ENCODE measurements at regions of chr12 and their contacts with region 1.

Region 1: DNA sequence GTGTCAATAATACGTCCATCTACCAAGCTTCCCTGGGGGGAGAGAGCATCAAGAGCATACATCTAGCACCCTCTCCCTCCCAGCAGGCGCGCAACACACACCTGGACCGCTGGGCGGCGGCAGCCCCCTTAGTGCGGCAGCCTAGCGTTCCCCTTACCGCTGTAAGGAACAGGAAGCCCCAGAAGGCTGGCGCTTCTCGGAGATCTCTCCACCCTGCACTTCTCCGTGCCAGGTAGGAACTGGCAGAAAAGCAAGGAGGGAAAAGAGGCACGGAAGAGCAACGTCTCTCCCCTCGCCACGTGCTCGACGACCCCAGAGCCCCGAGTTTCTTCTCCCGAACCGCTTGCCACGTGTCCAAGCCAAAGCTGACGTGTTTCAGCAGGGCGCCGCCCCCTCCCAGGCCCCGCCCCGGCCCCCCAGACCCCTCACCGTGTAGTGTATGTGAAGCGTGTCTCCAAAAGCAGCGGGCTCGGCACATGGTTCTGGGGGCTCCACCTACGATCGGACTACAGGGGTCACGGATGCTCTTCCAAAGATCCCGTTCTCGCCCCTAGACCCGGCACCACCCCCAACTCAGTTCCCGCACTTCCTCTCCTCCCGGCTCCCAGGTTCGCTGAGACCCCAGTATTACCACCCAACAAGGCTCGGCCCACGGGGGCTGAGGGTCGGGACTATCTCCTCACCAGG is 532 bp downstream of the FKBP11 start:
- DNase-seq: peak; percentile 79 to 85 (median 81)
- H3K4me3 ChIP-seq: peak overlapping the region; percentile 20 to 97
- H3K4me3 Mint-ChIP-seq: peak overlapping the region; percentile 95 to 98 (median 97)
- H3K27ac ChIP-seq: peak overlapping the region; percentile 95
- H3K27ac Mint-ChIP-seq: peak overlapping the region; percentile 96 to 100 (median 99)
- H3K4me1 ChIP-seq: peaks cover 34% of the 10 kb centered on the region
- H3K4me1 Mint-ChIP-seq: peaks cover 36 to 66% (median 52%) of the 10 kb centered on the region in 4 donors
- H3K27me3 ChIP-seq: no peaks in the 10 kb centered on the region
- H3K27me3 Mint-ChIP-seq: no peaks in the 10 kb centered on the region

Region 2: DNA sequence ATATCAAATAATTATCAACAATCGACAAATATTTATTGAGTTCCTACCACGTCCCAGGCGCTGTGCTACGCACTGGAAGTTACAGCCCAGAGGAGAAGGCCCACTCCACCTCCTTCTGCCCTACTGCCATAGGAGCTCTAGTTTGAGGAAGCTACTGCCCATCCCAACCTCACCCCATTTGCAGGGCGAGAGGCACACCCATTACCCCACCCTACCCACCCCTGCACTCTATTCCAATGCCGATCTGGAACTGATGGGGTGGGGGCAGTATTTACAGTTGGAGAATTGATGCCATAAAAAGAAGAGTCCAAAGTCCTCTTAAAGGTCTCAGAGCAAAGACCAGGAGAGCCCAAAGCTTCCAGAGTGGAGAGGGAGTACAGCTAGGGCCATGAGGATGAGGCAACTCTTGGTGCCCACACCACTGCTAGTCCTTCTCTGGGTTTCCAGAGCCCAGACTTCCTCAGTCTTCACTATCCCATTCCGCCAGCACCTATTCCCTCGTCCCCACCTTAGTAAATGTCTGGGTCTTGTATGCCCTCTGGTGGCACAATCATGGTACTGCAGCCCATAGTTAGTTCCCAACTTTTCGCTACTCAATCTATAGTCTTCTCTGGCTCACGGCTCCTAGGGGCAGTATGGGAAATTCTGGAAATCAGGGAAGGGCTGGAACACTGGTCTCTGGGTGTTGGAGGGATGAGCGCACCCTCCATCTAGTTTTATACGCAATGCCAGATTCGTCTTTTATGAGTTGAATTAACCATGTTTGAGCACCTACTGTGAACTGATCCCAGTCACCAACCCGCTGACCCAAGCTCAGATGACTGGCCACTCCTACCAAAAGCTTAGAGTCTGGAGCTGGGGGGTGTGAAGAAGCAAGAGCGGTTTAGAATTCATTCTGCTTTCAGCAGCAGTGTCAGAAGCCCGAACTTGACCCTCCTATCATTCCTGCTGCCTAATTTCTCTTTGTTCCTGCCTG is 129.0 kb before region 1 on chr12:
- CTCF ChIA-PET with region 1: no interaction called
- POLR2A ChIA-PET with region 1: no interaction called
- intact Hi-C with region 1: no loop called
- DNase-seq: peak in 4 of 5 donors; percentile 43 to 56 (median 51)
- H3K4me3 ChIP-seq: no peak overlapping the region
- H3K4me3 Mint-ChIP-seq: no peak overlapping the region
- H3K27ac ChIP-seq: no peak overlapping the region
- H3K27ac Mint-ChIP-seq: no peak overlapping the region
- H3K4me1 ChIP-seq: no peaks in the 10 kb centered on the region
- H3K4me1 Mint-ChIP-seq: peaks cover 0 to 4% (median 3%) of the 10 kb centered on the region in 4 donors
- H3K27me3 ChIP-seq: no peaks in the 10 kb centered on the region
- H3K27me3 Mint-ChIP-seq: peaks cover 0 to 7% of the 10 kb centered on the region in 2 donors

Region 3: DNA sequence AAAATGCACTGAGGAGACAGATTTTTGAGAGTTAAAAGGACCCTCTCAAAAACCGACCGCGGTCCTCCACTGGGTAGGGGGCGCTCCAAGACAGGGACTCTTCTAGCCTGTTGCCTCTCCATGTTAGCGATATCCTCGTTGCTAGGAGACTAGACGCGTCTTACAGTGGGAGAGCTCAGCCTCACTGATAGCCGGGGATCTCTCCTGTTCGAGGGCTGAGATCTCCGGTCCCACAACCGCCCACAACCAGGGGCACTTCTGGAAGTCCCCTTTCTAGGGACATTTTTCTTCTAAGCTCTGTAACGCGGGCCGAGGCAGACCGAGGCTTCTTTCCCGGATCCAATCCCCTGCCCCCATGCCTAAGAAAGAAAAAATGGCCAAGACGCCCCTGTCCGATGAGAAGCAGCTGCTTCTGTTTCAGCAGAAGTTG is 20.8 kb before region 1 on chr12:
- CTCF ChIA-PET with region 1: interaction called, 82 read pairs
- POLR2A ChIA-PET with region 1: interaction called, 14 read pairs
- intact Hi-C with region 1: loop called (anchors 2 kb)
- DNase-seq: peak; percentile 81 to 89 (median 82)
- H3K4me3 ChIP-seq: peak overlapping the region in 1 of 2 donors; percentile 36
- H3K4me3 Mint-ChIP-seq: peak overlapping the region; percentile 68 to 86 (median 82)
- H3K27ac ChIP-seq: no peak overlapping the region
- H3K27ac Mint-ChIP-seq: peak overlapping the region in 6 of 7 donors; percentile 76 to 92 (median 89)
- H3K4me1 ChIP-seq: peaks cover 6% of the 10 kb centered on the region
- H3K4me1 Mint-ChIP-seq: peaks cover 2 to 13% (median 7%) of the 10 kb centered on the region in 4 donors
- H3K27me3 ChIP-seq: no peaks in the 10 kb centered on the region
- H3K27me3 Mint-ChIP-seq: peaks cover 0 to 4% of the 10 kb centered on the region in 2 donors

Region 4: DNA sequence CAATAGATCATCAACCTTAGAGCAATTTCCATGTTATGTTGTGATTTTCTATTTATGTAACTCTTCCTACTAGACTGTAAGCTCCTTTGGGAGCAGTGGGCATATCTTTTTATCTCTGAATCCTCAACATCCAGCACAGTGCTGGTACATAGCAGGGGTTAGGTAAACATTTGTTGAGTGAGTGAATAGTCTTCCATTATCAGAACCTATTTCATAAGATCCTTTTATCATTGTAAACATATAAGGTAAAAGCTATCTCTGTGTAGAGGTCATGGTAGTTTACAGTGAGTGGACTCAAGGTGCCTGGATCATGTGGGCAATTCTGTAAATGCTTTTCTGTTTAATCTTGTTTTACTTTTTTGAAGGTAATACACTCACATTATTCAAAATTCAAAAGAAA is 14.6 kb before region 1 on chr12:
- CTCF ChIA-PET with region 1: interaction called, 82 read pairs
- POLR2A ChIA-PET with region 1: interaction called, 8 read pairs
- intact Hi-C with region 1: loop called (anchors 2 kb)
- DNase-seq: no peak
- H3K4me3 ChIP-seq: no peak overlapping the region
- H3K4me3 Mint-ChIP-seq: no peak overlapping the region
- H3K27ac ChIP-seq: no peak overlapping the region
- H3K27ac Mint-ChIP-seq: no peak overlapping the region
- H3K4me1 ChIP-seq: no peaks in the 10 kb centered on the region
- H3K4me1 Mint-ChIP-seq: no peaks in the 10 kb centered on the region
- H3K27me3 ChIP-seq: no peaks in the 10 kb centered on the region
- H3K27me3 Mint-ChIP-seq: peaks cover 0 to 4% of the 10 kb centered on the region in 2 donors

Region 5: GRCh38 chr12:48936379-48936979 is 11.7 kb after region 1 on chr12:
- CTCF ChIA-PET with region 1: interaction called, 190 read pairs
- POLR2A ChIA-PET with region 1: interaction called, 70 read pairs
- intact Hi-C with region 1: loop called (anchors 1 kb)
- DNase-seq: peak; percentile 74 to 82 (median 78)
- H3K4me3 ChIP-seq: no peak overlapping the region
- H3K4me3 Mint-ChIP-seq: no peak overlapping the region
- H3K27ac ChIP-seq: peak overlapping the region; percentile 71
- H3K27ac Mint-ChIP-seq: peak overlapping the region; percentile 86 to 97 (median 95)
- H3K4me1 ChIP-seq: peaks cover 45% of the 10 kb centered on the region
- H3K4me1 Mint-ChIP-seq: peaks cover 31 to 50% (median 38%) of the 10 kb centered on the region in 4 donors
- H3K27me3 ChIP-seq: no peaks in the 10 kb centered on the region
- H3K27me3 Mint-ChIP-seq: no peaks in the 10 kb centered on the region

Region 6: GRCh38 chr12:48957141-48958048 is 32.6 kb after region 1 on chr12 and contains the start of gene ARF3:
- CTCF ChIA-PET with region 1: interaction called, 3 read pairs
- POLR2A ChIA-PET with region 1: interaction called, 31 read pairs
- intact Hi-C with region 1: loop called (anchors 2 kb)
- DNase-seq: peak; percentile 91 to 93 (median 93)
- H3K4me3 ChIP-seq: peak within 1 kb of the TSS; percentile 45 to 71
- H3K4me3 Mint-ChIP-seq: peak within 1 kb of the TSS; percentile 92 to 98 (median 96)
- H3K27ac ChIP-seq: peak within 1 kb of the TSS; percentile 73
- H3K27ac Mint-ChIP-seq: peak within 1 kb of the TSS; percentile 91 to 97 (median 95)
- H3K4me1 ChIP-seq: peaks cover 34% of the 10 kb centered on the region
- H3K4me1 Mint-ChIP-seq: peaks cover 27 to 54% (median 38%) of the 10 kb centered on the region in 4 donors
- H3K27me3 ChIP-seq: no peaks in the 10 kb centered on the region
- H3K27me3 Mint-ChIP-seq: peaks cover 1 to 2% of the 10 kb centered on the region in 2 donors
- total RNA-seq, gene ARF3: 69.8 to 77.5 TPM

Region 7: DNA sequence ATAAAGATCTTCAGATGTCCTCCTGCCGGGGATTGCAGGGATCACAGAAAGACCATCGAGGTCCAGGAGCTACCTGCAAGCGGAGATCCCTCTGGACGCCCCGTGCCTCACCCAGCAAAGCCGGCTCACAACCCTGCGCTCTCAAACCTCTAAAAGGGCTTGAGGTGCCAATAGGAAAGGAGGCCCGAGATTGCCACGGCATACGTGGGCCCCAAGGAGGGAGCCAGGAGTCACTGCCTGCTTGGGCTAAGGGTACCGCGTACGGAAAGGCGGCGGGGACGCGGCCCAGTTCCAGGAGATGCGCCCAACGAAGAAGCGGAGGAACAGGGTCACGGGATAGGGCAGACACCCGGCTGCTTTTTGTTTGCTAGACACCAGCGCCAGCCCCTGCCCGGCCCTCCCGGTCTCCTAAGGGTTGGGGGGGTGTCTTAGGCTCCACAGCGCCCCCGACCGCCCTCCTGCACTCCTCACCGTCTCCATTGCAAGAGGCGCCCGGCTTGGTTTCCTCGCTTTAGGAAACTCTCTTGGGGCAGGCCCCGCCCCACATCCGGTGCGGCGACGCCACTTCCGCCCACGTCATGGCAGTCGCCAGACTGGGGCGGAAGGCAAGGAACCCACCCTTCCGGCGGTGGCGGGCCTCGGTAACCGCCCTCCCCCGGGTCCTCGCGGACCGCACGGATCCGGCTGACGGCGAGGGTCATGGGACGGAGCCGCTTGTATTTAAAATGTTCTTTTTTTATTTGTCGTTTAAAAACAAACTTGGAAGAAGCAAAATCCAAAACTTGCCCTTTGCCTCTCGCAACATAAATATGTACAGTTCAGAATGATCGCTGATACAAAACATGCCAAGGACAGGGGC is 93.7 kb after region 1 on chr12 and contains the start of gene PRKAG1:
- CTCF ChIA-PET with region 1: no interaction called
- POLR2A ChIA-PET with region 1: interaction called, 3 read pairs
- intact Hi-C with region 1: loop called (anchors 1 kb)
- DNase-seq: peak; percentile 97 to 98 (median 98)
- H3K4me3 ChIP-seq: peak within 1 kb of the TSS; percentile 94 to 96
- H3K4me3 Mint-ChIP-seq: peak within 1 kb of the TSS; percentile 87 to 99 (median 94)
- H3K27ac ChIP-seq: peak within 1 kb of the TSS; percentile 95
- H3K27ac Mint-ChIP-seq: peak within 1 kb of the TSS; percentile 95 to 100 (median 99)
- H3K4me1 ChIP-seq: peaks cover 24% of the 10 kb centered on the region
- H3K4me1 Mint-ChIP-seq: peaks cover 18 to 51% (median 37%) of the 10 kb centered on the region in 4 donors
- H3K27me3 ChIP-seq: no peaks in the 10 kb centered on the region
- H3K27me3 Mint-ChIP-seq: no peaks in the 10 kb centered on the region
- total RNA-seq, gene PRKAG1: 48.9 to 53.7 TPM

Region 8: DNA sequence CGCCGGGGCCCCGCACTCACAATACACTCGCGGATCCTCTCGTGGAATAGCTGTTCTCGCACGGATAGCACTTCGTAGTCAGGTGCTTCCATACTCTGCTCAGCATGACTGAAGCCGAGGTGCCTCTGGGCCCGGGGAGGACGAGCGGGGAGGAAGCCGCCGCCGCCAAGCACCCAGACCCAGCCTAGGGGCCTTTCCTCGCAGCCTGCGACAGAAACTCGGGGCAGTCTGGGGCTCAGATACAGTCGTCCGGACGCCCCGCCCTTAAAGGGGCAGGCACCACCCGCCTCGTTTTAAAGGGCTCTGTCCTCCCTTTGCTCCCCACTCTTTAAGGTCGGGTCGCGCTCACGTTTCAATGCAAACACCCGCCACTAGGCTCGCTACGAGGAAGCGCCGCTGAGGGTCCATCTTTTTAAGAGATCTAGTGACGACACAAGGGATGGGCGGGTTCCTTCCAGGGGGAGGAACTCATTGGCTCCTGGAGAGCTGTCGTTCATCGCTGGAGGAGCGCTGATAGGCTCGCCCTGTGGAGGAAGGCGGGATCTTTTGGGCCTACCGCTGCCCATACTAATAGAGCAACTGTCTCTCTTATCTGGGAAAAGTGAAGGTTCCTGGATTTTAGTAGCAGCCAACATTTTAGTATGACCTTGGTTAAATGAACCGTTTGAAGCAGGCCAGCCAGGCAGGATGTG is 185.8 kb after region 1 on chr12 and contains the start of gene LMBR1L:
- CTCF ChIA-PET with region 1: no interaction called
- POLR2A ChIA-PET with region 1: no interaction called
- intact Hi-C with region 1: no loop called
- DNase-seq: peak; percentile 94 to 99 (median 97)
- H3K4me3 ChIP-seq: peak within 1 kb of the TSS; percentile 73 to 92
- H3K4me3 Mint-ChIP-seq: peak within 1 kb of the TSS; percentile 91 to 99 (median 98)
- H3K27ac ChIP-seq: peak within 1 kb of the TSS; percentile 88
- H3K27ac Mint-ChIP-seq: peak within 1 kb of the TSS; percentile 94 to 99 (median 98)
- H3K4me1 ChIP-seq: peaks cover 22% of the 10 kb centered on the region
- H3K4me1 Mint-ChIP-seq: peaks cover 25 to 48% (median 35%) of the 10 kb centered on the region in 4 donors
- H3K27me3 ChIP-seq: no peaks in the 10 kb centered on the region
- H3K27me3 Mint-ChIP-seq: no peaks in the 10 kb centered on the region
- total RNA-seq, gene LMBR1L: 222 to 226 TPM

Region 9: DNA sequence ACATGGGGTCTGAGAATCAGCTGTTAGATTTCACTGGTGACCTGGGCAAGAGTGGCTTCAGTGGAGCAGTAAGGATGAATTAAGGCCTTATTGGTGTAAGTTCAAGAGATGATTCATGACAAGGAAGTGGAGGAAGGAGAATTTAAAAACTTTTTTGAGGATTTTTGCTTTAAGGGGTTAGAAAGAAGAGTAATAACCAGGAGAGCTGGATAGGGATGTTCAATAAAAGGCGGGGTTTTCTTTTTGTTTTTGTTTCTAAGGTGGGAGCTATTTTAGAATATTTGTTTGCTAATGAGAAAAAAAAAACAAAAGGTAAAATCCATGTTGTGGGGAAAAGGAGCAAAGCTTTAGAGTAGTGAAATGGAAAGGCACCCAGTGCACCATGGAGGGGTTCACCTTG is 221.6 kb after region 1 on chr12:
- CTCF ChIA-PET with region 1: no interaction called
- POLR2A ChIA-PET with region 1: no interaction called
- intact Hi-C with region 1: no loop called
- DNase-seq: no peak
- H3K4me3 ChIP-seq: no peak overlapping the region
- H3K4me3 Mint-ChIP-seq: no peak overlapping the region
- H3K27ac ChIP-seq: no peak overlapping the region
- H3K27ac Mint-ChIP-seq: no peak overlapping the region
- H3K4me1 ChIP-seq: no peaks in the 10 kb centered on the region
- H3K4me1 Mint-ChIP-seq: peaks cover 0 to 3% (median 0%) of the 10 kb centered on the region in 4 donors
- H3K27me3 ChIP-seq: no peaks in the 10 kb centered on the region
- H3K27me3 Mint-ChIP-seq: no peaks in the 10 kb centered on the region

Measured in CD4-positive, alpha-beta memory T cell (primary cell).